Right cardiac atrium (tissue), 5 donors: ENCODE measurements at regions of chr6 and their contacts with region 1.

Region 1: DNA sequence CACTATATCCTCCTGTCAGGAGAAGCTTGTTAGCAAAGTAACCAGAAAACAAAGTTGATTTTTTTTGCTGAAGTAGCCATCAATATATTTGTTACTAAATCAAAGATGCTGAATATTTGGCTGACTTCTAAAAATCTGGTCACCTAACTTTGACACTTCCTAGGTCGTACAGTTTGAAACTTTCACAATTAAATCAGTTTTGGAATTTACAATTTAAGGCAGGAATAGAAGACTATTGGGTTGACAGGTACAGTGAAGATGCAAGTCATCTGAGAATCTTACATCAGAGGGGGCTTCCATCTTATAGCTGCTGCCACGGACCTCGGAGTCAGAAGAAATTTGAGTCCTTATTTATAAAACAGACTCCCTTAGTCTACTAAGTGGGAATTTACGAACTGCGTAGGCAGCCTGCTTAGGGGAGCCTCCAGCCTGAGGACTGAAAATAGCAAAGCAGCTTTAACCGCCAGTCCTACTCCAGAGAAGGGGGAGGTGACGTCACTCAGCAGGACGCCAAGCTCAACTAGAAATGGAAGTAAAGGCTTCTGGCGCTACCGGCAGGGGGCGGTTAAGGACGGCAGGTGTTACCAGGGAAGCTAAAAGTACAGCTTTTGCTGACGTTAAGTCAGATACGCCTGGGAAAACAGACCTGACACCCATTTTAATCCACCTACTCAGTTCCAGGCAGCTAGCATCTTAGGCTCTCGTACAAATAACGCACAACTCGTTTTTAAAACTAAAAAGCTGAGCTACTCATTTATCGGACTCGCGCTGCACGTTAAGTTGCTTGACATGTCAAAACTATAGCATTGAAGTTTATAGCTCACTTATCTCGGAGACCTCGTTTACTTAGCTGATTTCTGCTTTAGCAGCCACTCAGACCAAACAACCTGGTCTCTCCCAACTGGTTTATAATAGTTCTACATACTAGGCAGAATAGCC is 61.1 kb upstream of the HFE start:
- DNase-seq: peak; percentile 94 to 97 (median 96)
- ATAC-seq: peak; percentile 73
- H3K4me3 ChIP-seq: peak overlapping the region; percentile 68
- H3K27ac ChIP-seq: peak overlapping the region; percentile 97
- H3K4me1 ChIP-seq: no peaks in the 10 kb centered on the region
- H3K27me3 ChIP-seq: no peaks in the 10 kb centered on the region

Region 2: DNA sequence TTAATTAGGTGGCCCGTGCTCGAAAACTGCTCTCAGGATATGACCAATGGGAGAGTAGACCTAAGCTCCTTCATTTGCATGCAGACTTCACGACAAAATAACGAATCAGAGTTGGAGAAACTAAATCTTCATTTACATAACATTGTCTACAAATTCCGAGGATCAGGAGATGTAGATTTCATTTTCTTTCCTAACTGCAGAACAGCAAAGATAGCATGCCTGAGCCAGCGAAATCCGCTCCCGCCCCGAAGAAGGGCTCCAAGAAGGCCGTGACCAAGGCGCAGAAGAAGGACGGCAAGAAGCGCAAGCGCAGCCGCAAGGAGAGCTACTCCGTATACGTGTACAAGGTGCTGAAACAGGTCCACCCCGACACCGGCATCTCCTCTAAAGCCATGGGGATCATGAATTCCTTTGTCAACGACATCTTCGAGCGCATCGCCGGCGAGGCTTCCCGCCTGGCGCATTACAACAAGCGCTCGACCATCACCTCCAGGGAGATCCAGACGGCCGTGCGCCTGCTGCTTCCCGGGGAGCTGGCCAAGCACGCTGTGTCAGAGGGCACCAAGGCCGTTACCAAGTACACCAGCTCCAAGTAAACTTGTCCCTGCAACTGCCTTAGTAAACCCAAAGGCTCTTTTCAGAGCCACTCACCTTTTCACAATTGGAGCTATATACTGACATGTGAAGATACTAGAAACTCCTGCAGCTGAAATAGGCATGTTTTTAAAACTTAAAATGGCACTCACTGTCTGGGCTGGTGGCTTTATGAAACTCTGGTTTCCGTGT is 157.6 kb after region 1 on chr6:
- intact Hi-C with region 1: loop called in 1 of 4 experiments (anchors 10 kb)
- DNase-seq: peak; percentile 66 to 87 (median 86)
- ATAC-seq: peak; percentile 95 to 96
- H3K4me3 ChIP-seq: peak overlapping the region; percentile 67
- H3K27ac ChIP-seq: peak overlapping the region; percentile 93
- H3K4me1 ChIP-seq: peaks cover 3% of the 10 kb centered on the region
- H3K27me3 ChIP-seq: no peaks in the 10 kb centered on the region

Region 3: DNA sequence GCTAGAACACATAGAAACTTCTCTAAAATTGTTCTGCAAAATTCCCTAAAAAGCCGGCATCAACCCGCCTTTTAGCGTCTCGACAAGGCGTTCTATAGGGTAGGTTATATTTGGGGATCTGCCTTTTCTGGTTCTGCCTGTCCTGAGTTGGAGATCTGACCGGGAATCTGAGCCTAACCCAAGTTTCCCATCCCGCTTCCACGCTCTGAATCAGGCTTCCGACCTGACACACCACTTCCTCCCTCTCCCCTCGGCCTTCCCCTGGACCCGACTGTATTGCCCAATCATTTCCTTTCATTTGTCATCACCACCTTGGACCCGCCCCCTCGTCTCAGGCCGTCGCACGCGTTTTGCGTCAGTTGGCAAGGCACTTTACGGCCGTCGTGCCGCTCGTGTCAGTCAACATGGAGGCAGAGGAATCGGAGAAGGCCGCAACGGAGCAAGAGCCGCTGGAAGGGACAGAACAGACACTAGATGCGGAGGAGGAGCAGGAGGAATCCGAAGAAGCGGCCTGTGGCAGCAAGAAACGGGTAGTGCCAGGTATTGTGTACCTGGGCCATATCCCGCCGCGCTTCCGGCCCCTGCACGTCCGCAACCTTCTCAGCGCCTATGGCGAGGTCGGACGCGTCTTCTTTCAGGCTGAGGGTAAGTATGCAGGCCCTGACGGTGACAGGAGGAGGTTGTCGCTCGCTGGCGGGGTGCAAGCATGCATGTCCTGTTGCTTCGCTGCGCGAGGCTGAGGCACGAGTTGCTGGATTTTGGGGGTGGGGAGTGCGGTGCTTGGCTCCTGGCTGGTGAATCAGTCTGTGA is 570.6 kb after region 1 on chr6 and contains the start of gene ABT1:
- intact Hi-C with region 1: loop called in 1 of 4 experiments (anchors 10 kb)
- DNase-seq: peak; percentile 98 to 99 (median 99)
- ATAC-seq: peak; percentile 97 to 98
- H3K4me3 ChIP-seq: peak within 1 kb of the TSS; percentile 67
- H3K27ac ChIP-seq: peak within 1 kb of the TSS; percentile 68
- H3K4me1 ChIP-seq: peaks cover 2% of the 10 kb centered on the region
- H3K27me3 ChIP-seq: no peaks in the 10 kb centered on the region
- total RNA-seq, gene ABT1: 8.9 to 9.5 (median 9.3) TPM

Region 4: DNA sequence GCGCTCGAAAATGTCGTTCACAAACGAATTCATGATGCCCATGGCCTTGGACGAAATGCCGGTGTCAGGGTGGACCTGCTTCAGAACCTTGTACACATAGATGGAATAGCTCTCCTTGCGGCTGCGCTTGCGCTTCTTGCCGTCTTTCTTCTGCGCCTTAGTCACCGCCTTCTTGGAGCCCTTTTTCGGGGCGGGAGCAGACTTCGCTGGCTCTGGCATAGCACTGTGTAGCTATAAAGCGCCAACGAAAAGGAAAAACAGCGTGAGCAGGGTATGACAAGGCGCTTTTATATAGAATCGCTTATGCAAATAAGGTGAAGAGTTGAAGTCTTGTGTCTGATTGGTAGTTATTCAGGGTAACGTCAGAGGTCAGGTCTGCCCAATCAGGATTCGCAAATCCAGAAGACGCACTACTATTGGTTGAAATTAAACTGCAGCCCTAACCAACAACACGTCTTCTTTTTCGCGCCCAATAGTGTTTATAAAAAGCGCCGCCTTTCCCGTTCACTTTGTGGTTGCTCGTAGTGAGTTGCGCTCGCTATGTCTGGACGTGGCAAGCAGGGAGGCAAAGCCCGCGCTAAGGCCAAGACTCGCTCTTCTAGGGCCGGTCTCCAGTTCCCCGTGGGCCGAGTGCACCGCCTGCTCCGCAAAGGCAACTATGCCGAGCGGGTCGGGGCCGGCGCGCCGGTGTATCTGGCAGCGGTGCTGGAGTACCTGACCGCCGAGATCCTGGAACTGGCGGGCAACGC is 1106.5 kb after region 1 on chr6:
- intact Hi-C with region 1: loop called in 1 of 4 experiments (anchors 10 kb)
- DNase-seq: peak; percentile 88 to 93 (median 91)
- ATAC-seq: peak; percentile 96 to 98
- H3K4me3 ChIP-seq: peak overlapping the region; percentile 41
- H3K27ac ChIP-seq: peak overlapping the region; percentile 99
- H3K4me1 ChIP-seq: peaks cover 4% of the 10 kb centered on the region
- H3K27me3 ChIP-seq: no peaks in the 10 kb centered on the region